HEK293 (cell line): ENCODE measurements at regions of chr15 and their contacts with region 1.

Region 1: DNA sequence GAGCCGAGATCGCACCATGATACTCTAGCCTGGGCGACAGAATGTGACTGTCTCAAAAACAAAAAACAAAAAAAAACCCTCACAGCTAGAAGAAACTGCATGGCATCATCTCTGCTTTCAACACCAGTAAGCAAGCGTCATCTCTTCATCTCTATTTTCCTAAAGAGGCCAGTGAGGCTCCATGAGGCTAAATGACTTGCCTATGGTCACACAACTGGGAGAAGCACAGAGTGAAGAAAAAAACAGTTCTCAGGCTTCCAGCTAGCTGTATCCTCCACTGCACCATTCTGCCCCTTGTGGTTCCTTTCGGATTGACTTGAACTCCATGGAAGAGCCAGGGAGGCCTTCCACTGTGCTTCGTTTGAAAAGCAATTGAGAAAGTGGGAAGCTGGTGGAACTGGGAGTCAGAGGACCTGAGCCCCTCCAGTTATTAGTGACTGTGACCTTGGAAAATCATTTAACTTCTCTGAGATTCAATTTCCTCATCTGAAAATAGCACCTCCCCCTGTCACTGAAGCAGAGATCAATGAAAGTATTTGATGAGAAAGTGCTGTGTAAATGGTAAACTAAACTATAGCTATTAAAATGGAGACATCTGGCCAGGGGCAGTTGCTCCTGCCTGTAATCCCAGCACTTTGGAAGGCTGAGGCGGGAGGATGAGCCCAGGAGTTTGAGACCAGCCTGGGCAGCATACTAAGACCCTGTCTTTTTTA is 32.1 kb upstream of the DENND4A start:
- H3K4me3 ChIP-seq: no peak overlapping the region
- H3K27ac ChIP-seq: no peak overlapping the region
- H3K4me1 ChIP-seq: peaks cover 3% of the 10 kb centered on the region; the same call in 1 of the 2 replicates
- CTCF ChIP-seq: peak; percentile 58; the same call in 1 of the 2 replicates

Region 2: DNA sequence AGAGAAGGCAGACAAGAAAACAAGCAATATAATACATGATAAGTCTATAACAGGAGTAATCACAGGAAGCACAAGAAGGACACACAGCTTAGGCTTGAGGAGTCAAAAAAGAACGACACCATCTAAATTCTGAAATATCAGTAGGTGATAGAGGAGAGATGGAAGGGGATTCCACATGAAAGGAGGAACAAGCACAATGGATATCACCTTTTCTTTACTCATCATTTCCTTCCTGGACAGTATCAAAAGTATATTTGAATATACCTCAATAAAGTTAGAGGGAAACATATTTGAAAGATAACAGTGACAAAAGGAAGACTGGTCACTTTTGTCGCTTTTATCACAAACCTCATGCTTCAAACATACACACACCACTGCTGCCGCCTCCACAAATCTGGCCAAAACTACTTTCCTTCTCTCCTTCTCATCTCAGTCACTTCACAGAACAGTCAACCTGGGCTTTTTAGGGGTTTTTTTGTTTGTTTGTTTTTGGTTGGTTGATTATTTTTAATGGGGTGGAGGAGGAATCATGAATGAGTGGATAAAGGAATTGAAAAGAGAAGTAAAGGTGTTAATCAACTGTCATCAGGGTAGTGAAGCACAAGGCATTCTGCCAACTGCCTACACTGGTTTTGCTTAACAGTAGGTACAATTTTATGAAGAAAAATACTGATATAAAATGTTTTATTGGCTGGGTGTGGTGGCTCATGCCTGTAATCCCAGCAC is 50.6 kb before region 1 on chr15:
- CTCF ChIA-PET with region 1: no interaction called
- POLR2A ChIA-PET with region 1: no interaction called
- H3K4me3 ChIP-seq: no peak overlapping the region
- H3K27ac ChIP-seq: no peak overlapping the region
- H3K4me1 ChIP-seq: peaks cover 21% of the 10 kb centered on the region
- CTCF ChIP-seq: no peak

Region 3: GRCh38 chr15:65804252-65804931 is 19.8 kb before region 1 on chr15:
- CTCF ChIA-PET with region 1: interaction called, 10 read pairs
- POLR2A ChIA-PET with region 1: no interaction called
- H3K4me3 ChIP-seq: no peak overlapping the region
- H3K27ac ChIP-seq: no peak overlapping the region
- H3K4me1 ChIP-seq: 0 out of 2 replicates have a peak, but pooled peaks cover 9% of the 10 kb centered on the region
- CTCF ChIP-seq: no peak

Region 4: DNA sequence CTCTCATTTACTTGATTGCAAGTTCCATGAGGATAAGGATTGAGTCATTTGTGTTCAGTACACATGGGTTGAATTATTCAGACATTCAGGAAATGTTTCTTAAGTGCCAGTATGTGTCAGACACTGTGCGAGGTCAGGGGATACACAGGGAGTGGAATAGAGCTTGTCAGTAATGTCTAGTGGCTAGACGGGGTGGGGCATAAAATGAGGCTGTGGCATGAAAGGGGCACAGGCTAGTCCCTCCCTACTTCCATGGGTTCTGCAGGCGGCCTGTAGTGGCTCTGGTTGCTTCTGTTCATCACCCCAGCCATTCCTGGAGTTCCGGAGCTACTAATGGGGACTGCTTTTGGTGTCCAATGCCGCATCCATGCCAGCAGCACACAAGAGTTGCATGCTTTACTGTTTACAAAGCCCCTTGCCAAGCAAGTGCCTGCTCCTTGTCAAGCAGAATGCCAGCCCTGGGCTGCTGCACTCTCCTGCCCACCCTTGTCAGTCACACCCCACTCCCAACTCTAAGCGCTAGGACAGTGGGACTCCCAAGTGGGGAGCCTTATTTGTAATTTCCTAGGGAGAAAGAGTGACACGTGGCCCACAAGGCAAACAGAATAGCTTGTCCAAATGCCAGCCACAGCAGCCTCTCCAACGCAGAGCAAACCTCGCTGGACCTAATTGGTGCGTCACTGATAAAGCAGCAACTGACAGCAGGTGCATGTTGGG is 115.9 kb after region 1 on chr15:
- CTCF ChIA-PET with region 1: no interaction called
- POLR2A ChIA-PET with region 1: no interaction called
- H3K4me3 ChIP-seq: no peak overlapping the region
- H3K27ac ChIP-seq: no peak overlapping the region
- H3K4me1 ChIP-seq: no peaks in the 10 kb centered on the region
- CTCF ChIP-seq: no peak